Activated B cell treated with CpG ODN at 0.5 μM for 24 hours (primary cell): ENCODE measurements at regions of chr21 and their contacts with region 1.

Region 1: GRCh38 chr21:25338415-25338814 is 268.9 kb downstream of the MRPL39 start:
- DNase-seq: no peak
- ATAC-seq: no peak
- H3K4me3 Mint-ChIP-seq: no peak overlapping the region
- H3K27ac Mint-ChIP-seq: no peak overlapping the region
- H3K4me1 Mint-ChIP-seq: peaks cover 4% of the 10 kb centered on the region
- H3K27me3 Mint-ChIP-seq: no peaks in the 10 kb centered on the region
- CTCF ChIP-seq: no peak

Region 2: GRCh38 chr21:25360593-25360992 is 22.2 kb after region 1 on chr21:
- CTCF ChIA-PET with region 1: no interaction called
- POLR2A ChIA-PET with region 1: no interaction called
- intact Hi-C with region 1: loop called (anchors 2 kb)
- DNase-seq: no peak
- ATAC-seq: no peak
- H3K4me3 Mint-ChIP-seq: no peak overlapping the region
- H3K27ac Mint-ChIP-seq: no peak overlapping the region
- H3K4me1 Mint-ChIP-seq: peaks cover 2% of the 10 kb centered on the region
- H3K27me3 Mint-ChIP-seq: no peaks in the 10 kb centered on the region
- CTCF ChIP-seq: no peak

Region 3: GRCh38 chr21:25813917-25814316 is 475.5 kb after region 1 on chr21:
- CTCF ChIA-PET with region 1: no interaction called
- POLR2A ChIA-PET with region 1: no interaction called
- intact Hi-C with region 1: no loop called
- DNase-seq: no peak
- ATAC-seq: no peak
- H3K4me3 Mint-ChIP-seq: no peak overlapping the region
- H3K27ac Mint-ChIP-seq: no peak overlapping the region
- H3K4me1 Mint-ChIP-seq: no peaks in the 10 kb centered on the region
- H3K27me3 Mint-ChIP-seq: no peaks in the 10 kb centered on the region
- CTCF ChIP-seq: no peak